ENCODE measurements at regions of chr1 and their contacts with region 1.

Region 1: DNA sequence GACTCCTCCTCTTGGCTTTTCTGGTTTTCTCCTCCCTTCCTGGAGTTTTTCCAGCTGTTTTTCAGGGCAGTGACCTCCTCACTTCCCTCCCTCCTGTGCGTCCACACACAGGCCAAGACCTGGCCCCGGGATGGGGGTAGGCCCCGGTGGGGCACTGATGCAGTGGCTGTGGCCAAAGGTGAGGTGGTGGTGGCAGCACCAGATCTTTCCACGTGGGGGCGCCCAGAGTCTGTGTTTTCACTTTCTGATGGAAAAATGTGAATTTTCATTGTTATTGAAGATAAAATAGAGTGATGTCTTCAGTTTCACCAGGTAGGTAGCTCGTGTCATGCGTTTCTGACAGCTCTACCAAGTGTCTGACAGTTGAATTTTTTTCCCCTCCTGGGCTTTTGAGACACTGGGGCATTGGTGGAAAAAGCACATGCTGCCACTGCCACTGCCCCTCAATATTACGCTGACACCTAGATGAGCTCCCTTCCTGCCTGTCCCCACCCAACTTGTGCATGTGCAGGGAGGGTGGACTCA is 39.9 kb upstream of the MAGOH start:
- DNase-seq: peak; percentile 38 to 75 (median 64)
- H3K4me3 ChIP-seq: no peak overlapping the region
- H3K27ac ChIP-seq: no peak overlapping the region
- H3K4me1 ChIP-seq: no peaks in the 10 kb centered on the region
- H3K27me3 ChIP-seq: no peaks in the 10 kb centered on the region
- CTCF ChIP-seq: peak; percentile 65 to 80 (median 77)
- EP300 ChIP-seq: no peak
- POLR2A ChIP-seq: no peak

Region 2: DNA sequence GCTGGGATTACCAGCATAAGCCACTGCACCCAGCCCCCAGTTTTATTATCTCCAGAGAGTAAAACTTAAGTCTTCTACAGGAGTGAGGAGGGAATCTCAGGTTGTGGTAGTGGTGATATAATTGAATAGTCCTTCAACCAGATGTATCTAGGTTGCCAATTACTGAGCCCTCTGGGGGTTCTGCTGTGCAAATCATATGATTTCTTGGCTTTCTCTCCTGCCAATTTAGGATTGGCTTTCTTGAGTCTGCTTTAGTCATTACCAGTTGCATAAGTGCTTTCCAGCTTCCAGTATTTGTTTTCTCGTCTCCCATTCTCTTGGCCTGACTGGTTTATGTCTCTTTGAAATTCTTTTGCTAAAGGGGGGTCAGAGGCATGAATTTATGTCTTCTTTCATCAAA is 70.5 kb before region 1 on chr1:
- intact Hi-C with region 1: no loop called
- DNase-seq: no peak
- H3K4me3 ChIP-seq: no peak overlapping the region
- H3K27ac ChIP-seq: no peak overlapping the region
- H3K4me1 ChIP-seq: no peaks in the 10 kb centered on the region
- H3K27me3 ChIP-seq: no peaks in the 10 kb centered on the region
- CTCF ChIP-seq: no peak
- EP300 ChIP-seq: no peak
- POLR2A ChIP-seq: no peak

Region 3: GRCh38 chr1:53393325-53393792 is 115.1 kb after region 1 on chr1:
- intact Hi-C with region 1: loop called (anchors 1 to 5 kb)
- DNase-seq: peak; percentile 65 to 89 (median 80)
- H3K4me3 ChIP-seq: no peak overlapping the region
- H3K27ac ChIP-seq: no peak overlapping the region
- H3K4me1 ChIP-seq: no peaks in the 10 kb centered on the region
- H3K27me3 ChIP-seq: no peaks in the 10 kb centered on the region
- CTCF ChIP-seq: peak; percentile 66 to 80 (median 75)
- EP300 ChIP-seq: no peak
- POLR2A ChIP-seq: no peak

Region 4: GRCh38 chr1:53592521-53592982 is 314.3 kb after region 1 on chr1:
- intact Hi-C with region 1: no loop called
- DNase-seq: peak in 2 of 5 donors; percentile 32 to 35
- H3K4me3 ChIP-seq: no peak overlapping the region
- H3K27ac ChIP-seq: no peak overlapping the region
- H3K4me1 ChIP-seq: peaks cover 2% of the 10 kb centered on the region
- H3K27me3 ChIP-seq: no peaks in the 10 kb centered on the region
- CTCF ChIP-seq: no peak
- EP300 ChIP-seq: no peak
- POLR2A ChIP-seq: no peak

Region 5: GRCh38 chr1:53754484-53755312 is 476.4 kb after region 1 on chr1:
- intact Hi-C with region 1: loop called in 1 of 4 experiments (anchors 10 kb)
- DNase-seq: peak in 1 of 5 donors; percentile 29
- H3K4me3 ChIP-seq: no peak overlapping the region
- H3K27ac ChIP-seq: no peak overlapping the region
- H3K4me1 ChIP-seq: no peaks in the 10 kb centered on the region
- H3K27me3 ChIP-seq: no peaks in the 10 kb centered on the region
- CTCF ChIP-seq: peak in 1 of 3 donors; percentile 20
- EP300 ChIP-seq: no peak
- POLR2A ChIP-seq: no peak